H1 (cell line): ENCODE measurements at regions of chr11 and their contacts with region 1.

Region 1: GRCh38 chr11:119044708-119045107 is 12.3 kb downstream of the HYOU1 start:
- DNase-seq: no peak
- H3K4me3 ChIP-seq: no peak overlapping the region
- H3K27ac ChIP-seq: no peak overlapping the region
- H3K4me1 ChIP-seq: peaks cover 0 to 3% (median 1%) of the 10 kb centered on the region in 4 experiments; a peak in 3 of 7 replicates
- H3K27me3 ChIP-seq: no peaks in the 10 kb centered on the region
- CTCF ChIP-seq: peak; percentile 38 to 63 (median 38)
- EP300 ChIP-seq: no peak
- POLR2A ChIP-seq: no peak
- RAD21 ChIP-seq: no peak

Region 2: GRCh38 chr11:119030329-119031049 is 14.2 kb before region 1 on chr11 and contains the start of gene SLC37A4:
- CTCF ChIA-PET with region 1: interaction called, 4 read pairs
- POLR2A ChIA-PET with region 1: interaction called, 10 read pairs
- DNase-seq: peak; percentile 98 to 100
- H3K4me3 ChIP-seq: peak within 1 kb of the TSS; percentile 64 to 84 (median 74)
- H3K27ac ChIP-seq: peak within 1 kb of the TSS; percentile 89
- H3K4me1 ChIP-seq: peaks cover 6 to 13% (median 10%) of the 10 kb centered on the region in 4 experiments
- H3K27me3 ChIP-seq: no peaks in the 10 kb centered on the region
- CTCF ChIP-seq: peak; percentile 77 to 98 (median 93)
- EP300 ChIP-seq: no peak
- POLR2A ChIP-seq: peak in 1 of 2 experiments; percentile 83; a peak in 2 of 3 replicates
- RAD21 ChIP-seq: peak; percentile 54 to 59
- total RNA-seq, gene SLC37A4: 29.0 and 35.1 TPM in 2 replicates

Region 3: DNA sequence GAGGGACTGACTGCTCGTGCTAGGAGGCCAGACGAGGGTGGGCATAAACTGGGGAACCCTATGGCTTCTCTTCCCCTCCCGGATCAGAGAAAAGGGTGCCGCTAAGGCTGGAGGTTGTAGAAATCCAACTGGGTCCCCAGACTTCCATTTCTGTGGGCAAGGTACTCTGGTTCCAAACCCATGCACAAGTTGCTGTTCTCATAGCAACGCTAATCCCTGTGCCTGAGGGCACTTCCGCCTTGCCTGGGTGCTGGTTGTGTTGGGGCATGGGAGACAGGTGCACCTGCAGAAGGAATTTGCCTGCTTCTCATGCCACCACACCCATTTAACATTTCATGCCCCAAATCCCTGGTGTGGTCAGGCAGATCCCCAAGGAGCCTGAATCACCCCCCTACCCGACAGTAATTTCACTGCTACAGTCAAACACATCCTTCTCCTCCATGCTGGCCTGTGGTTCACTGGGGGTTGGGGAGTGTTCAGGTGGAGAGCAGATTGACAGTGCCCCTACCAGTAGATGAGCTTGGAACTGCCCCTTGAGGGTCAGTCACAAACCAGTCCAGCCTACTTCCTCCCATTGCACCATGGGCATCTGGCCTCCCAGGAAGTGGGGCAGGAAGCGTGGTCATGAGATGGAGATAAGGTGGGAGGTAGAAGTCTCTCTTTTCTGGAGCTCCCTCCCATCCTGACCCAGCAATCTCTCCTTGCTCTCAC is 63.6 kb after region 1 on chr11:
- CTCF ChIA-PET with region 1: no interaction called
- POLR2A ChIA-PET with region 1: no interaction called
- DNase-seq: peak in 1 of 2 experiments; percentile 63
- H3K4me3 ChIP-seq: peak overlapping the region; percentile 71 to 83 (median 75)
- H3K27ac ChIP-seq: no peak overlapping the region
- H3K4me1 ChIP-seq: peaks cover 0 to 20% (median 5%) of the 10 kb centered on the region in 4 experiments; a peak in 5 of 7 replicates
- H3K27me3 ChIP-seq: peaks cover 2 to 20% (median 15%) of the 10 kb centered on the region in 4 experiments
- CTCF ChIP-seq: no peak
- EP300 ChIP-seq: no peak
- POLR2A ChIP-seq: no peak
- RAD21 ChIP-seq: no peak